Posterior cingulate gyrus (tissue), 11 donors: ENCODE measurements at regions of chr22 and their contacts with region 1.

Region 1: DNA sequence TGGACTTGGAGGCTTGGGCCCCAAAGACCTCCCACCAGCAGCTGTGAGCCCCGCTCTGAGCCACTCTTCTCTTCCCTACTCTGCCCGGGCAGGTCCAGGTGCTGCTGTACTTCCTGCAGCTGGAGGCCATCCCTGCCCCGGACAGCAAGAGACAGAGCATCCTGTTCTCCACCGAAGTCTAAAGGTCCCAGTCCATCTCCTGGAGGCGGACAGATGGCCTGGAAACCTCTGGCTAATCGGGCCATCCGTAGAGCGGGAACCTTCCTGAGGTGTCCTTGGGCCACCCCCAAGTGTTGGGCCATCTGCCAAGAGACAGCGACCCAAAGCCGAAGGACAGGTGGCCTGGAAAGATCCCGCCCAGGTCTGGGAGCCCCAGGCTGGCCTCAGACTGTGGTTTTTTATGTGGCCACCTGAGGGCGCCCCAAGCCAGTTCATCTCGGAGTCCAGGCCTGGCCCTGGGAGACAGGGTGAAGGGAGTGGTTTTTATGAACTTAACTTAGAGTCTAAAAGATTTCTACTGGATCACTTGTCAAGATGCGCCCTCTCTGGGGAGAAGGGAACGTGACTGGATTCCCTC is 135.1 kb downstream of the BCR start:
- DNase-seq: peak; percentile 29 to 93 (median 74)

Region 2: DNA sequence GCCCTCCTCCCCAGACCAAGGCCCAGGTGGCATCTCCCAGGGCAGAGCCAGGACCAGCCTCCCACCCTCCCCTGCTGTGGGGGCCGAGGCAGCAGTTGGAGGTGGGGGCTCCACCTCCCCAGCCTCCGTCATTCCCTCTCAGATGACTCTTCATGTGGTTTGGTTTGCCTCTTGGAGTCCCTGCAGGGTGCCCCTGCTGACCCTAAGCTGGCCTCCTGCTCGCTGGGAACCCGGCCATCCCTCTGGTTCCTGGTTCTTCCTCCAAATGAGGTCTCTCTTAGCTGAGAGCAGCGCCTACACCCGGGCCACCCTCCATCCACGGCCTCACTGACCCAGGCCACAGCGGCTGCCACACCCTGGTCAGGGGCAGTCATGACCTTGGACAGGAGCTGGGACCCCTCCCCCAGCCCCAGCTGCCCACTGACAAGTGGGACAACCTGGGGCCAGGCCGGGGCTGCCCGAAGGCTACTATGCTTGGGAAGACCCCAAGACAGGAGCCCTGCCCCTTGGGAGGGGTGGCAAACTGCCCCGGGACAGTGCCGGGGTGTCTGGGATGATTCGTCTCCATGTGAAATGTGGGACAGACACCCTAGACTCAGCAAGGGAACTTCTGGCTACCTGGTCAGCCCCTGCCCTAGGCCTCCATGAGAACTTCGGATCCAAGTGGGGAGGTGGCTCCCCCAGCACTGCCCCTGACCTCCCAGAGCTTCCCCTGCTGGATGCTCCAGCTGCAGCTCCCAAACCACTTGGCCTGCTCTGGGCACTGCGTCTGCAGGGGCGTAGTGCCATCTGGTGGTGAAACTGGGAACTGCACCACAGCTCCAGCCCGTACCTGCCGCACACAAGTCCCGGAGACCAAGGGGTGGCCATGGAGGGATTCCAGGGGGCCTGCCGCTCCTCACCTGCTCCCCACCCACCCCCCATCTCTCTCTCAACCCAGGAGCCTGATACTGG is 70.1 kb after region 1 on chr22:
- intact Hi-C with region 1: loop called (anchors 1 kb)
- DNase-seq: peak; percentile 75 to 98 (median 91)